ENCODE measurements at regions of chr9 and their contacts with region 1.

Region 1: GRCh38 chr9:37415011-37415719 is 7.3 kb upstream of the GRHPR start:
- DNase-seq: peak; percentile 92
- H3K4me3 ChIP-seq: peak overlapping the region; percentile 55
- H3K27ac ChIP-seq: peak overlapping the region; percentile 97
- H3K4me1 ChIP-seq: peaks cover 94% of the 10 kb centered on the region
- CTCF ChIP-seq: peak; percentile 92

Region 2: GRCh38 chr9:37293664-37294524 is 121.3 kb before region 1 on chr9:
- CTCF ChIA-PET with region 1: no interaction called
- POLR2A ChIA-PET with region 1: interaction called, 13 read pairs
- intact Hi-C with region 1: no loop called
- DNase-seq: peak; percentile 97
- H3K4me3 ChIP-seq: peak overlapping the region; percentile 46
- H3K27ac ChIP-seq: peak overlapping the region; percentile 99
- H3K4me1 ChIP-seq: peaks cover 100% of the 10 kb centered on the region
- CTCF ChIP-seq: no peak

Region 3: DNA sequence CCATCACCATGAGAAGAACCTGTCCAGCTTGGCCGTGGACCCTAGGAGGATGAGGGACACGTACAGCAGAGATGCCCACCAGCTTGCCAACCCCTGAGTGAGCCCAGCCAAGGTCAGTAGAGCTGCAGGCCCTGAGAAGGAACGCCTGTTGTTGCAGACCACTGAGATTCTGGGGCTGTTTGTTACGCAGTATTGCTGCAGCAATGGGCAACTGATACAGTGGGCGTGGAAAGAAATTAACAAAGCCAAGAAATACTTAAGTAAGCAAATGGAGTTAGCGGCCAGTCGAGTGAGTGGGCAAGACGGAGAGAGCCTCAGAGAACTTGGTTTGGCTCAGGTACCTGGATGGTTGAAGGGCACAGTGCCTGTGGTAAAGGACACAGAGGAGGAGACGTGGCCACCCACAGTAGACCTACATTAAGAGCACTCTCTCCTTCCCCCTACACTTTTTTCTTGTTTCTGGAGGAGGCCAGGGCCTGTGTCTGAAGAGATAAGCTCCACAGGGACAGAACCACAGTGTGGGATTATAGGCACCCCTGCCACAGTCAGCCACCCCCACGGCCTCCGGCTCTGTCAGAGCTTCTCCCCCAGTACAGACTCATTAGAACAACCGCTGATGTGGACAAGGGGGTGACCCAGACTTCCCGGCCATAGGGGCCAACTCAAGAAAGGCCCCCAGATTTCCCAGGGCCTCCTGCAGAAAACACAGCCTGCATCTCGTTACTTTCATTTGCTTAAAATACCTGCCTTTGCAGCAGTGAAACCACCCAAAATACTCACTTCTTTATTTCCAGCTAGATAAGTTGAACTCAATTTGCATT is 32.8 kb before region 1 on chr9:
- CTCF ChIA-PET with region 1: interaction called, 4 read pairs
- POLR2A ChIA-PET with region 1: interaction called, 298 read pairs
- intact Hi-C with region 1: no loop called
- DNase-seq: peak; percentile 71
- H3K4me3 ChIP-seq: peak overlapping the region; percentile 30
- H3K27ac ChIP-seq: peak overlapping the region; percentile 90
- H3K4me1 ChIP-seq: peaks cover 93% of the 10 kb centered on the region
- CTCF ChIP-seq: no peak

Region 4: DNA sequence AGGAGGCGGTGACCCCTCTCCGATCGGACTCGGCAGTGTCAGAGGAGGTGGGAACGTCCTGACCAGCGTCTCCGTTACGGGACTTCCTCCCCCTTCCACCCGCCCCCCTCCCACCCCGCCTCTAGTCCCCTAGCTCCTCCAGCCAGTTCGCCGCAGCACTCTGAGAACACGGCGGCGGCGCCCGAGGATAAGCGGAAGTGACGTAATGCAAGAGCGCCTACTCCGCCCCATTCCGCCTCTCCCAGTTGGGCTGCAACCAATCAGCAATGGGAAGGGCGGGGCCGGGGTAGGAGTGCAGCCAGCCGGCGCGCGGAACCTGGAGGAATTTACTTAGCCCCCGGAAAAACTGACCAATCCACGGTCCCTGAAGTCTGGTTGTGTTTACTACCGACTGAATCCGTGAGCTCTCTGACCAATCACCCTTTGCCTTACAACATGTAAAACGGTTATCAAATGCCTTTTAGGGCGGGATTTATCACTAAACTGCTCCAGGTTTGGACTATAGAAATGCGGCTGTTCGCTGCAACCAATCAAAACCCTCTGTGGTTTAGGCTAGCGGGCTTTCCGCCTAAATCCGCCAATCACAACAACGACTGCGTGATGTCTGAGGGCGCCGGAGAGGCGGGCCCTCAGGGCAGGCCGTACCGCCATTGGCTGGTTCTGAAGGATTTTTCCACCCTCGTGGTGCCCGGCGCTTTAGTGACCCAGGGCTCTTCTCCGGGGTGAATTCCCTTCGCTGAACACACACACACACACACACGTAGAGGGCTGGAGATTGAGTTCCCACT is 50.3 kb after region 1 on chr9 and contains the start of gene ZBTB5:
- CTCF ChIA-PET with region 1: interaction called, 3 read pairs
- POLR2A ChIA-PET with region 1: interaction called, 5 read pairs
- intact Hi-C with region 1: loop called (anchors 2 kb)
- DNase-seq: peak; percentile 100
- H3K4me3 ChIP-seq: peak within 1 kb of the TSS; percentile 89
- H3K27ac ChIP-seq: peak within 1 kb of the TSS; percentile 74
- H3K4me1 ChIP-seq: peaks cover 38% of the 10 kb centered on the region
- CTCF ChIP-seq: no peak
- total RNA-seq, gene ZBTB5: 27.9 and 31.9 TPM in 2 replicates